Astrocyte of the cerebellum (primary cell): ENCODE measurements at regions of chr2 and their contacts with region 1.

Region 1: DNA sequence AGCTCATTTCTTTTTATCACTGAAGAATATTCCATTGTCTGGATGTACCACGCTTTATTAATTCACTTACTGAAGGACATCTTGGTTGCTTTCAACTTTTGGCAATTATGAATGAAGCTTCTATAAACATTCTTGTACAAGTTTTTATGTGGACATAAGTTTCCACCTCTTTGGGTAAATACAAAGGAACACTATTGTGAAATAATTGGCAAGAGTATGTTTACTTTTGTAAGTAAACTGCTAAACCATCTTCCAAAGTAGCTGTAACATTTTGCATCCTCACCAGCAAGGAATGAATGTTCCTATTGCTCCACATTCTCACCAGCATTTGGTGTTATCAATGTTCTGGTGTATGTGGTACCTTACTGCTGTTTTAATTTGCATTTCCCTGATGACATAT is 15.8 kb upstream of the VWC2L start:
- DNase-seq: peak; percentile 13
- H3K4me3 ChIP-seq: no peak overlapping the region
- CTCF ChIP-seq: no peak

Region 2: DNA sequence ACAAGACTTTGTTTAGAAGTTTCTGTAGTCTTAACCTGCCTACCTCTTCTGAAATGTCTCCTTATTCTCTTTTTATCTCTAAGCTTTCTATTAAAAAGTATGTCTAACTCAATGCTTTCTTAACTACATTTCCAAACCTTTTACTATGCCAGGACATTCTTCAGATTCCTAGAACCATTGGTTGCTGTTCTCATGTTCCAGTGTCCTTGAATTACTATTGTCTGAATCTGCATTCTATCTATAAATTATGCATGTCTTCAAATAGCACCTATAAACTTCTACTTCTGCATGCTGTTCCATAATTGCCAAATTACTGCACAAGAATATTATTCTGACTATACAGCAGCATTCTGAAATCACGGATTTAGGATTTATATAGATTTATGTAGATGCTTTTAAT is 150.2 kb before region 1 on chr2:
- in situ Hi-C with region 1: loop called (anchors 10 kb)
- DNase-seq: peak; percentile 15
- H3K4me3 ChIP-seq: no peak overlapping the region
- CTCF ChIP-seq: no peak